Naive thymus-derived CD4-positive, alpha-beta T cell (primary cell): ENCODE measurements at regions of chr1 and their contacts with region 1.

Region 1: DNA sequence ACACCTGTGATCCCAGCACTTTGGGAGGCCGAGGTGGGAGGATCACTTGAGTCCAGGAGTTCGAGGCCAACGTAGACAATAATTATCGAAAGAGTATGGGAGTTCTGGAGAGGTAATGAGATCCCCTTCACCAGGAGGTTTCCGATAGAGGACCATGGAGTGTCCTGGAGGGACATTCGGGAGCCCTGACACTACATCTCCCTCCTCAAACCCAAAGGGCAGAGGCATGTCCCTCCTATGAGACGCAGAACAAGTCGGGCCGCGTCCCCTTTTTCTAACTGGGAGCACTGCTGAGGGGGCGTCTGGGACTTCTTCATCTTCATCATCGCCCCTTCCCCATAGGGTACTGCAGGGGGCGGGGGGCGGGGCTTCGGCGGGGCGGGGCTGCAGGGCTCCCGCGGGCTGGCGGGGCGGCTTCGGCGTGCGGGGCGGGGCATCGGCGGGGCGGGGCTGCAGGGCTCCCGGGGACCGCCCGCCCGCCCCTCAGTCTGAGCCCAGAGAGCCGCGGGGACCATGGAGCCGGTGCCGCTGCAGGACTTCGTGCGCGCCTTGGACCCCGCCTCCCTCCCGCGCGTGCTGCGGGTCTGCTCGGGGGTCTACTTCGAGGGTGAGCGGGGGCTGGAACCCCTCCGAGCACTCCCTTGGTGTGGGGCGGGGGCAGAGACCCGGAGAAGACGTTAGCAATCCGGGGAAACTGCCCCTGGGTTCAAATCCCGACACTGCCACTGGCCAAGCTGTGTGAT is at the start of gene THEMIS2:
- DNase-seq: peak; percentile 46 to 81 (median 67)
- ATAC-seq: peak; percentile 81
- H3K4me3 ChIP-seq: peak within 1 kb of the TSS; percentile 87
- H3K4me3 Mint-ChIP-seq: peak within 1 kb of the TSS; percentile 89 to 99 (median 98)
- H3K27ac ChIP-seq: peak within 1 kb of the TSS; percentile 79
- H3K27ac Mint-ChIP-seq: peak within 1 kb of the TSS; percentile 81 to 96 (median 91)
- H3K4me1 ChIP-seq: peaks cover 34 to 39% of the 10 kb centered on the region in 2 donors
- H3K4me1 Mint-ChIP-seq: peaks cover 29 to 70% (median 48%) of the 10 kb centered on the region in 7 donors
- H3K27me3 ChIP-seq: no peaks in the 10 kb centered on the region
- H3K27me3 Mint-ChIP-seq: no peaks in the 10 kb centered on the region
- total RNA-seq, gene THEMIS2: 48.8 to 234 (median 72.3) TPM

Region 2: GRCh38 chr1:27830621-27831424 is 41.4 kb before region 1 on chr1 and contains the start of gene PPP1R8:
- CTCF ChIA-PET with region 1: no interaction called
- POLR2A ChIA-PET with region 1: no interaction called
- intact Hi-C with region 1: loop called (anchors 1 to 2 kb)
- DNase-seq: peak; percentile 57 to 89 (median 86)
- ATAC-seq: peak; percentile 100
- H3K4me3 ChIP-seq: peak within 1 kb of the TSS; percentile 71
- H3K4me3 Mint-ChIP-seq: peak within 1 kb of the TSS; percentile 90 to 96 (median 93)
- H3K27ac ChIP-seq: peak within 1 kb of the TSS; percentile 92
- H3K27ac Mint-ChIP-seq: peak within 1 kb of the TSS; percentile 86 to 96 (median 92)
- H3K4me1 ChIP-seq: peaks cover 16% of the 10 kb centered on the region in 2 donors
- H3K4me1 Mint-ChIP-seq: peaks cover 16 to 51% (median 38%) of the 10 kb centered on the region in 7 donors
- H3K27me3 ChIP-seq: no peaks in the 10 kb centered on the region
- H3K27me3 Mint-ChIP-seq: no peaks in the 10 kb centered on the region
- total RNA-seq, gene PPP1R8: 17.5 to 60.2 (median 39.5) TPM

Region 3: DNA sequence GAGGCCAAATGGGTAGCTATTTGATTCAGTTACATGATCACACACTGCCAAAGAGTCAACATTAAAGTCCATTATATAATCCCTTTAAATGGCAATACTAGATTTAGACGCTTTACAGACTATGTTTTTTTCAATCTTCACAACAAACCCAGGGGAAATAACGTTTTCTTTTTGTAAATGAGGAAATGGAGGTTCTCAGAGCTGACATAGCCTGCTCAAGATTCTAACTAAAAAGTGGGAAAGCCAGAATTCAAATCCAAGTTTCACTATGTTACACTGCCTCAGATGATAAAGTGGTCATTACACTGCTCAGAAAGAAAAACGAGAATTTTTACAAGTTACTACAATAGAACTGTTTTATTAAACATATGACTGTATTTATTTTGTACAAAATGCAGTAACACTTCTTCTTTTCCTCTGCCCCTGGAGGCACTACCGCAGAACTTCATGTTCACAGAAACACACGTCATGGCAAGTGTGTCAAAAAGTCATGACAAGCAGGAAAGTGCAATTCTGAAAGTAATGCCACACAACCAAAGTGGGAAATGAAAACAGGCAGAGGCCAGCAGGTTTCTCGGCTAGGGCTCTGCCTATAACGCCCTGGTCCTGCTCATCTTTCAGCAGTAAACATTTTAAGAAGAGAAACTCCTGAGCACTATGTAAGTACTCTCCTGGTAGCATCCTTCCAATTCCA is 19.1 kb after region 1 on chr1:
- CTCF ChIA-PET with region 1: interaction called, 3 read pairs
- POLR2A ChIA-PET with region 1: interaction called, 36 read pairs
- intact Hi-C with region 1: loop called (anchors 1 kb)
- DNase-seq: peak in 6 of 9 donors; percentile 16 to 59 (median 38)
- ATAC-seq: peak; percentile 78
- H3K4me3 ChIP-seq: no peak overlapping the region
- H3K4me3 Mint-ChIP-seq: peak overlapping the region in 9 of 10 donors; percentile 8 to 69 (median 42)
- H3K27ac ChIP-seq: peak overlapping the region; percentile 58
- H3K27ac Mint-ChIP-seq: peak overlapping the region; percentile 33 to 96 (median 88)
- H3K4me1 ChIP-seq: peaks cover 29 to 40% of the 10 kb centered on the region in 2 donors
- H3K4me1 Mint-ChIP-seq: peaks cover 27 to 78% (median 64%) of the 10 kb centered on the region in 7 donors
- H3K27me3 ChIP-seq: no peaks in the 10 kb centered on the region
- H3K27me3 Mint-ChIP-seq: no peaks in the 10 kb centered on the region

Region 4: DNA sequence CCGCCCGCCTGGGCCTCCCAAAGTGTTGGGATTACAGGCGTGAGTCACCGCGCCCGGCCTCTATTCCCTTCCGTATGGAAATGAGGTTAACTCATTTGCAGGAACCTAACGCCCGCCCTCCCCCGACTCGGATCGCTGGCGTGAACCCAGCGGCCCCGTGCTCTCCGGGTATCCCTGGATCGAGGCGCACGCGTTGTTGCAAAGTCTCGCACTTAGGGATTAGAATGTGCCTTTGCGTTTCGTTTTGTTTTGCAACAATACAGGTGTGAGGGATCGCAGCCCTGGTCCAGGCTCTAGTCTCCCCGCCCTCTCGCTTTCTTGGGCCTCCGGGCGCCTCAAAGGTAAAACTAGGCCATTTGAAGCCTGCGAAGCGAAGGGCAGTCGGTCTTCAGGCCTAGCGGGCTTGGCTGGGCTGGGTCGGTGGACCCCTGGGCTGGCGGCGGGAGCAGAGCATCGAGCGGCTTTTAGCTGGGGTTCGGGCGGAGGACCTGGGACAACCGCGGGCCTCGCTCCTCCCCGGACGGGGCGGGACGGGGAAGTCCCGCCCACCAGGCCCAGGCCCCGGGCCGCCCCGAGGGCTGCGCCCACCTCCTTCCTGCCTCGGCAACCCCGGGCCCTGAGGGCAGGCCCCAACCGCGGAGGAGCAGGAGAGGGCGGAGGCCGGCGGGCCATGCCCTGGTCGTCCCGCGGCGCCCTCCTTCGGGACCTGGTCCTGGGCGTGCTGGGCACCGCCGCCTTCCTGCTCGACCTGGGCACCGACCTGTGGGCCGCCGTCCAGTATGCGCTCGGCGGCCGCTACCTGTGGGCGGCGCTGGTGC is 87.4 kb after region 1 on chr1 and contains the start of gene XKR8:
- CTCF ChIA-PET with region 1: no interaction called
- POLR2A ChIA-PET with region 1: no interaction called
- intact Hi-C with region 1: loop called (anchors 1 to 5 kb)
- DNase-seq: peak; percentile 76 to 87 (median 85)
- ATAC-seq: peak; percentile 99
- H3K4me3 ChIP-seq: peak within 1 kb of the TSS; percentile 79
- H3K4me3 Mint-ChIP-seq: peak within 1 kb of the TSS; percentile 85 to 91 (median 88)
- H3K27ac ChIP-seq: peak within 1 kb of the TSS; percentile 91
- H3K27ac Mint-ChIP-seq: peak within 1 kb of the TSS; percentile 79 to 94 (median 91)
- H3K4me1 ChIP-seq: peaks cover 19 to 24% of the 10 kb centered on the region in 2 donors
- H3K4me1 Mint-ChIP-seq: peaks cover 12 to 39% (median 28%) of the 10 kb centered on the region in 7 donors
- H3K27me3 ChIP-seq: no peaks in the 10 kb centered on the region
- H3K27me3 Mint-ChIP-seq: peaks cover 0 to 7% (median 0%) of the 10 kb centered on the region in 5 donors
- total RNA-seq, gene XKR8: 8.4 to 15.8 (median 10.7) TPM